Left colon (tissue), 2 donors: ENCODE measurements at regions of chr1 and their contacts with region 1.

Region 1: DNA sequence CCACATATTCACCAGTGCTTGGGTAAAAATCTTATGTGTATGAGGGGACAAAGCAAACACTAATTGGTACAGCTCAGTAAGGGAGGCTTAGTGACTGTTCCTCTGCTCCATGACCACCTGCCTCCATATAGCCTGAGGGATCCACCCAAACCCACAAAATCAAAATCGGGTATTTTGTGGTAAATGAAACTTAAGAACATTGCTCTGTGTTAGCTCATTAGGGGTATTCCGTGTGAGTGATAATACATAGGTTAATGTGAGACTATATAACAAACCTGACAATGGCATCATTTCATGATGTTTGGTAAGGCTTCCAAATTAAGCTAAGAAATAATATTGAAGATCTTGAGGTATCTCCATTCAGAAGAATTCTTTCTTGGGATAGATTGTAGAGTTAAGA is 25.8 kb downstream of the COL9A2 start:
- DNase-seq: no peak
- ATAC-seq: no peak

Region 2: DNA sequence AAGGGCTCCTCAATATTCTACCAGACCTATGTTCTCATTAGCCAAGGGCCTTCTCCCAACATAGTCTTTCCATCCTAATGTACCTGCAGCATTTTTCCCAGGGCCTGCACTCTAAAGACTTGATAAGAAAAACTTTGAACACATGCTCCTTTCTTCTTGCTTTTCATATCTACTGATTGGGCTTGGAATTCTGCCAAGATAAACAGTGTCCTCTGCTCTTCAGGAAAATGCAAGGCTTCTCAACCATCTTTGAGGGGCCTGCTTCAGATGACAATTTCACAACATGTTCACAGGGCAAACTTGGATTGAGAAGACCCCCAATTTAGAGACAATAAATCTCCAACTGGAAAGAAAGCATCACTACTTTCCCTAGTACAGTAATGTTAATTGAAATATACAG is 168.4 kb before region 1 on chr1:
- intact Hi-C with region 1: no loop called
- DNase-seq: no peak
- ATAC-seq: no peak

Region 3: GRCh38 chr1:40197656-40198055 is 93.6 kb before region 1 on chr1:
- intact Hi-C with region 1: no loop called
- DNase-seq: no peak
- ATAC-seq: no peak

Region 4: GRCh38 chr1:40210514-40211204 is 80.6 kb before region 1 on chr1:
- intact Hi-C with region 1: loop called in 1 of 2 experiments (anchors 2 kb)
- DNase-seq: no peak
- ATAC-seq: no peak

Region 5: DNA sequence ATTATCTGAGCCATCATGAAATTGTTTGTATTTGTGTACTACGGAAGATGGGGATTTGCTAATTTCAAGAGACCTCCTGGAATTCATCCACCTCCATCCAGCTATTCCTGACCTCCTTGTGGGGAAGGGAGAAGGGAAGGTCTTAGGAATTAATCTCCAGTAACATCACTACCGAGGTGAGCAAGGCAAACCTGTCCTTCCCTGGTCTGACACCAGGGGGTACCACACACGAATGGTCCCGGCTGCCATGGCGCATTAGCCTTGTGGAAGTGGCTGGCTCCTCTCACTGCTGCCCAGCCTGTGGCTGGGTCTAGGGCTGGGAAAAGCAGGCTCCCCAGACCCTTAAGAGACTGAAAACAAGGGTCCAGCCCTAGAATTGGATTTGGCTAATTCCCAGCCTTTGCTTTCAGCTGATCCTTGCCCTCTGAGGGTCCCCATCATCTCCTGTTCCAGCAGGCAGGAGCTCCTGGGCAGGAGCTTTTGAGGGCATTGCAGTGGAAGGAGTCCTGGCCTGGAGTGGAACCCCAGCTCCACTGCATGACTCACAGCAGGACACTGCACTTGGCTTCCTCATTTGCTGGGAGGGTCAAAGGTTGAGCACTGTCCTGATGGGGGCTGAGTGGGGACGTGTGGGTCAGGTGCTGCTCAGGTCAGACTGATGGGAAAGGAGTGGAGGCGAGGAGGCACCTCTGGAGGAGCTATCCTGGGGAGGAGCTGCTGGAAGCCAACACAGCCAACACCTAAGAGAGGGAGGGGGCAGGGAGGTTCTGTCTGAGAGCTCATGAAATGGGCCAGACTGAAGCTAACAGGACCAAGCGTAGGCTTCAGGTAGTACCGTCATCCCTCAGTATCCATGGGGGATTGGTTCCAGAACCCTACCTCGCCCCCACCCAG is 339.4 kb after region 1 on chr1:
- intact Hi-C with region 1: no loop called
- DNase-seq: no peak
- ATAC-seq: peak; percentile 26

Region 6: DNA sequence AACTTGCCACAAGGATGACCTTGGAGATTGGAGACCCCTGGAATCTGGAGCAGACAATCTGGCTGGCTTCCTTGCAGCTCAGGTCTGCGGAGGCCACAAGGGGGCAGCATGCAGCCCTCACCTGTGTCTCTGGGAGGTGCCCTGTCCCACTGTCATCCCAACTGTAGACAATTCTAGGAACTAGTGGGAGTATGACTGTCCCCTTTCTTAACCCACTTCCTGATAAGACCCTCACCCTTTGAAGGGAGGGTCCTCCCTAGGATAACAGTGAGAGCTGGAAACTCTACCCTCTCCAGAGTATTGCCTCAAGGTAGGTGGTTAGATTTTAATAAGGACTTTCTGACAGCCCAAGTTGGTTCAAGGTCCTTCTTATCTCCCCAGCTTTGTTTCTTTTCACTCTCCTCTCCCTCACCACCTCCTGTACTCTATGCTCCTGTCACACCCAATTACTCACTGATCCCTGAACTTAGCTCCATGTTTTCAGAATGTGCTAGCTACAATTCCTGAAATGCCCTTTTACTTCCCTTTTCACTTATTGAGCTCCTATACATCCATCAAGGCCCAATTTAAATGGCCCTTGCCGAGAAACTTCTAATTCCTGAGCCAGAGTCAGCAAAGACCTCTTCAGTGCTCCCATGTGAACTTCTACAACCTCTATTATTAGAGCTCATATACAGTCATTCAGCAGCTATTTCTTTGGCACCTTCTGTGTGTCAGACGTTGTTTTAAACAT is 483.1 kb after region 1 on chr1:
- intact Hi-C with region 1: no loop called
- DNase-seq: peak; percentile 44 to 81
- ATAC-seq: peak; percentile 79